ENCODE measurements at regions of chr19 and their contacts with region 1.

Region 1: DNA sequence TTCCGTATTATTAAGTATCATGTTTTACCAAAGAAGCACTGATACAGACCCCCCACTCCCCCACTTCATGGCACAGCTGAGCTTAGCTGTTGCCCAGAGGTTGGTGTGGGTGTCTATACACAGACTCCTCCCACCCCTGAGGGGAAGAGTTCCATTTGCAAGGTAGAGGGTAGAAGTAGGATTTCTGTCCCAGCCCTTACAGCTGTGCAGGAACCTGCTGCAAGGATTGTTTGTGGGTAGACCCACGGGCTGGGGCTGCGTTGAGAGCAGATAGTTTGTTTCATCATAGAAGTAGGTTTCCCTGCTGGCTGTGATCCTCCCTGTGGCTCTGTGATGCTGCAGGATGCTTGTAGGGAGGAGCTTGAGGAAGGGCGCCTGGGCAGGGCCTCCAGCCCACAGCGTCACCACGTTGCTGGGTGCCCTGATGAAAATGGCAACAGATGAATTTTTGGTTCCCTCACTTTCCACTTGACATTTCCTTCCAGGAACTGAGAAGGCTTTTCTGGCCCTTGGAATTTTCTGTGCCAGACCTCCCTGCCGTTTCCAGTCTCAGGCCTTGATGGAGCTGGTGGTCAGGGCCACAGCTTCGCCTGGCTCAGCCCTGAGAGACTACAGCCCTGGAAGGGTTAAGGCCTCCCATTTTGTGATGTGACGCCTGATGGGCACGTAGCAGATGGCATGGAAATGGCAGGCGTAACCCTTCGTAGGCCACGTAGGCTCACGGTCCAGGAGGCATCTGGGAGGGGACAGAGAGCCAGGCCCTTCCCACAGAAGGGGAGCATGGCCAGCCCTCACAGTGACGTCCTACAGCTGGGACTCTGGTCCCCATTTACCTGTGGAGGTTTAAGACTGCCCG is 42.1 kb downstream of the GATAD2A start:
- DNase-seq: peak in 8 of 10 donors; percentile 40 to 71 (median 58)
- ATAC-seq: peak; percentile 78 to 92
- H3K4me3 Mint-ChIP-seq: peak overlapping the region in 9 of 10 donors; percentile 1 to 70 (median 24)
- H3K27ac Mint-ChIP-seq: peak overlapping the region; percentile 77 to 94 (median 90)
- H3K4me1 Mint-ChIP-seq: peaks cover 52 to 93% (median 85%) of the 10 kb centered on the region in 4 donors
- H3K27me3 Mint-ChIP-seq: no peaks in the 10 kb centered on the region

Region 2: DNA sequence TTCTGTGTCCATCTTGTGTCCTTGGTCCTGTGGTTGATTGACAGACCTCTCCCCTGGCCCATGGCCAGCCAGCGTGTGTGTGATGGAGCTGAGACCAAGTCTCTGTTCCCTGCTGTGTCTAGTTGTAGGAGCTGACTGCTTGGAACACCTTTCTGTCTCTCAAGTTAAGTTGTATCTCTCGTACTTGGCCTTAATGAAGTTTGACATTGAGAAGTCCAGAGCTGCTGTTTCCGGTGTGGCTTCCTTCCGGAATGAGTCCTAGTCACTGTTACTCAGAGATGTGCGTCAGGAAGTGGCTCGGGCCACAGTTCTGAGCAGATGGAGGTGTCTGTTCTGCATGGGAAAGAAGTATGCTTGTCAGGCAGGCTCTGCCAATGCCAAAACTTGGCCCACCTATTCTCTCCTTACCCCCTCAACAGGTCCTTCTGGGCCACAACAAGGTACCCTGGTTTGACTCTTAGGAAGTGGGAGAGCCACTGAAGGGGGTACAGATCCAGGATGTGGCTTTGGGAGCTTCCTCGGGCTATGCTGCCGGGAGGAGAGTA is 12.2 kb after region 1 on chr19:
- POLR2A ChIA-PET with region 1: interaction called, 11 read pairs
- DNase-seq: peak in 9 of 10 donors; percentile 49 to 76 (median 57)
- ATAC-seq: peak; percentile 58 to 68
- H3K4me3 Mint-ChIP-seq: peak overlapping the region; percentile 80 to 97 (median 89)
- H3K27ac Mint-ChIP-seq: peak overlapping the region; percentile 93 to 99 (median 98)
- H3K4me1 Mint-ChIP-seq: peaks cover 38 to 93% (median 83%) of the 10 kb centered on the region in 4 donors
- H3K27me3 Mint-ChIP-seq: no peaks in the 10 kb centered on the region